ENCODE measurements at regions of chr20 and their contacts with region 1.

Region 1: DNA sequence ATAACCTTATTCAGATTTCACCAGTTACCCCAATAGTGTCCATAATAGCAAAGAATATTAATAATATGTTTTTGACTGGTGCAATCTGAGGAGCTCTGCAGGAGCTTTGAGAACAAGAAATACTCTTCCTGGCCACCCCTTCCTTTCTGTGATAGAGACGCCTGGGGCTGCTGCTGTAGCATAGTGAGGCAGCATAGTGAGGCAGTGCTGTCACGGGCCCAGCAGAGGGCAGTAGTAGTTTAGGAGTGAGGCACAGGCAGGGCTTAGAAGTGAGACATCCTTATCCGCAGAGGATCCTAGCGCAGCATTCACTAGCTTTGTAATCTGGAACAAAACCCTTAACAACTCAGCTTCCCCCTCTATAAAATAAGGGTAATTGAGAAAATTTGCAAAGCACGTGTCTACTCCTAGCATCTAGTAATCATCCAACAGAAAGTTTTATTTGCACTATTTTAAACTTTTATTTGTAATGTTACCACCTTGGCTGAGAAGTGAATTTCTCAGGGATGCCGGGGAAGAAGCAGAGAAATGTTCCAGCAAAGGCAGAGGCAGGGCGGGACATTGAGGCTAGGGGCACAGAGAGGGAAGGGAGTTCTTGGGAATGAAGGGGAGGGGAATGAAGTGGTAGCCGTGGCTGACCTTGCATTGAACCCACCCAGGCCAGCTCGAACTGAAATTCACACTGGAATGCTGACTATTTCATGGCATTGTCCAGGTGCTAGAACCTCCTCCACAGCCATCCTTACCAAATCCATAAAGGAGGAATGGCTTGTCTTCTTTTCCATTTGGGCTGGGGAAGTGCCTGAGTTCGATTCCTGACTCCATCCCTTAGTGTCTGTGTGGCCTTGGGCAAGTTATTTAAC is 78.8 kb downstream of the CDS2 start:
- DNase-seq: peak; percentile 84
- ATAC-seq: peak; percentile 84

Region 2: GRCh38 chr20:5156675-5157448 is 48.7 kb before region 1 on chr20:
- intact Hi-C with region 1: no loop called
- DNase-seq: no peak
- ATAC-seq: no peak

Region 3: GRCh38 chr20:5168651-5169396 is 36.8 kb before region 1 on chr20:
- intact Hi-C with region 1: no loop called
- DNase-seq: no peak
- ATAC-seq: no peak

Region 4: GRCh38 chr20:5215672-5216304 is 10.2 kb after region 1 on chr20:
- intact Hi-C with region 1: loop called (anchors 2 kb)
- DNase-seq: no peak
- ATAC-seq: no peak

Measured in Right ventricle myocardium inferior (tissue), 1 donor.